Activated naive CD4-positive, alpha-beta T cell treated with anti-CD3 and anti-CD28 coated beads, Interleukin-2, amount 10 ng/mL, durations not matched to agents 7 days and 5 days (primary cell): ENCODE measurements at regions of chr22 and their contacts with region 1.

Region 1: GRCh38 chr22:22810018-22810427 is 77.6 kb upstream of the IGLL5 start:
- DNase-seq: peak; percentile 85
- H3K4me3 Mint-ChIP-seq: no peak overlapping the region
- H3K27ac Mint-ChIP-seq: no peak overlapping the region
- H3K4me1 Mint-ChIP-seq: peaks cover 23% of the 10 kb centered on the region
- H3K27me3 Mint-ChIP-seq: peaks cover 23% of the 10 kb centered on the region

Region 2: DNA sequence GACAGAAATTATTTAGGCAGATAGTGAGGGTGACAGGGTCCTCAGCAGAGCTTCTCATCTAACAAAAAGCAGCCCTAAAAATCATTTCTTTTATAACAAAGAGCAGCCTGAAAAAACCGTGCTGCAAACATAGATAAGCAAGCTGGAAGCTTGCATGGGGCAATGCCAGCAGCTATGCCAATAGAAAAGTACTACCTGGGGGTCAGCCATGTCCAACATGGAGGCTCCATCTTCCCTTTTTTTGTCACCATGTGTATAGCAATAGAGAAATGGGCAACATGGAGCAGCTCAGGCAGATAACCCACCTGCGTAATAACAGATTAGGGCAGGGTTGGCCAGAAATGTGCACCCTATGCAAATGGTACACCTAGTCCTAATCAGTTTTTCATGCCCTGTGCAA is 20.2 kb after region 1 on chr22:
- CTCF ChIA-PET with region 1: interaction called, 16 read pairs
- DNase-seq: no peak
- H3K4me3 Mint-ChIP-seq: no peak overlapping the region
- H3K27ac Mint-ChIP-seq: no peak overlapping the region
- H3K4me1 Mint-ChIP-seq: peaks cover 4% of the 10 kb centered on the region
- H3K27me3 Mint-ChIP-seq: peaks cover 42% of the 10 kb centered on the region

Region 3: GRCh38 chr22:22855617-22856308 is 45.7 kb after region 1 on chr22:
- CTCF ChIA-PET with region 1: interaction called, 151 read pairs
- DNase-seq: peak; percentile 64
- H3K4me3 Mint-ChIP-seq: no peak overlapping the region
- H3K27ac Mint-ChIP-seq: no peak overlapping the region
- H3K4me1 Mint-ChIP-seq: no peaks in the 10 kb centered on the region
- H3K27me3 Mint-ChIP-seq: peaks cover 79% of the 10 kb centered on the region

Region 4: GRCh38 chr22:22870577-22871404 is 60.8 kb after region 1 on chr22:
- CTCF ChIA-PET with region 1: interaction called, 18 read pairs
- DNase-seq: no peak
- H3K4me3 Mint-ChIP-seq: no peak overlapping the region
- H3K27ac Mint-ChIP-seq: no peak overlapping the region
- H3K4me1 Mint-ChIP-seq: peaks cover 11% of the 10 kb centered on the region
- H3K27me3 Mint-ChIP-seq: peaks cover 77% of the 10 kb centered on the region

Region 5: DNA sequence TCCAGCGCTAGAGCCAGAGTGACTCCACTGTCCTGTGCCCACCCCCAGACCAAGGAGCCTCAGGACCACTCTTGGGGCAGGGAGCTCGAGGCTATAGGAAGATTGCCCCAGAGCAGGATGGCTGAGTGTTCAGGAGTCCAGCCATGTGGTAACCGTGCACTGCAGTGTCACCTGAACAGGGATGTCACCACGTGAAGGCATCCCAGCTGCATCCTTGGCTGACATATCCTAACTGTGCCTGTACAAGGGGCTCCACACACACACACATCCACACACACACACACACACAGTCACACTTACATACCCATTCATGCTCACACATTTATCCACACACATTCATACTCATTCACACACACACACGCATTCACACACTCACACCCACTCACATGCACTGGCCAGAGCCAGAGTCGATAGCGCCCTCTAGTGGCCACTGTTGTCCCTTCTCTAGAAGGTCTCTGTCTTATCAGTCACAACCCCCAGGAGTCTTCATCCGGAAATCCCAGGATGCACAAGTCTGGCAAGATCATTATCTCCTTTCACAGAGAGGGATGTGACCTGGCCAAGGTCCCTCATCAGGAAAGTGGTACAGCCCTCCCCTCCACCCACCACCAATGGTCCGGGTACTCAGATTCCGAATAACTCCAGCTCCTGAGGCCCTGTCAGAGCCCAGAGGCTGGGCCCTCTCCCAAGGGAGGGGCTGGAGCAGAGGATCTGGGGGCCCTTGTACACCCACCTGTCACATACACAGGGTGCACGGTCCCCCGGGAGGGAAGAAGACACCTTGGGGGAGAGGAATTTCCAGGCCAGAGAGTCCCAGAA is 132.7 kb after region 1 on chr22:
- CTCF ChIA-PET with region 1: interaction called, 13 read pairs
- DNase-seq: peak; percentile 89
- H3K4me3 Mint-ChIP-seq: no peak overlapping the region
- H3K27ac Mint-ChIP-seq: no peak overlapping the region
- H3K4me1 Mint-ChIP-seq: peaks cover 2% of the 10 kb centered on the region
- H3K27me3 Mint-ChIP-seq: peaks cover 67% of the 10 kb centered on the region

Region 6: GRCh38 chr22:22974795-22975580 is 165.0 kb after region 1 on chr22:
- CTCF ChIA-PET with region 1: no interaction called
- DNase-seq: no peak
- H3K4me3 Mint-ChIP-seq: no peak overlapping the region
- H3K27ac Mint-ChIP-seq: no peak overlapping the region
- H3K4me1 Mint-ChIP-seq: no peaks in the 10 kb centered on the region
- H3K27me3 Mint-ChIP-seq: peaks cover 19% of the 10 kb centered on the region